ENCODE measurements at regions of chr18 and their contacts with region 1.

Region 1: GRCh38 chr18:28013066-28013465 is 163.9 kb downstream of the CDH2 start:
- DNase-seq: no peak
- ATAC-seq: no peak

Region 2: DNA sequence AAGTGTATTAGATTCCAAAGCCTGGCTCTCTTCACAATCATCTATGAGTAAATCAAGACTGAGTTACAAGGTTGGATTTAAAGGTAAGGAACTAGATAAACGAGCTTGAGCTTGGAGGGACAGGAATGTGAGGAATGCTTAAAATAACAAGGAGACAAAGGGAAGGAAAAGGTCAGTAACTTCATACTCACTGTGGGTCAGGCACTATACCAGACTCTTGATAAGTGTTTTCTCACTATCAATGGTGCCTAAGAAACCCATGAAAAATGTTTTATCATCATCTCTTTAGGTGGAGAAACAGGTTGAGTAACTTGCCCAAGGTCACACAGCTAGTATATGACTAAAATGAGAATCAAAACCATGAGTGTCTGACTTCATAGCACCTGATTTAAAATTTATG is 48.3 kb before region 1 on chr18:
- intact Hi-C with region 1: no loop called
- DNase-seq: no peak
- ATAC-seq: no peak

Region 3: GRCh38 chr18:28108814-28109213 is 95.7 kb after region 1 on chr18:
- intact Hi-C with region 1: loop called (anchors 10 kb)
- DNase-seq: no peak
- ATAC-seq: peak; percentile 44

Region 4: GRCh38 chr18:28161608-28162599 is 148.8 kb after region 1 on chr18:
- intact Hi-C with region 1: loop called (anchors 10 kb)
- DNase-seq: no peak
- ATAC-seq: peak; percentile 37

Region 5: GRCh38 chr18:28288784-28289183 is 275.7 kb after region 1 on chr18:
- intact Hi-C with region 1: no loop called
- DNase-seq: no peak
- ATAC-seq: no peak